ENCODE measurements at regions of chr18 and their contacts with region 1.

Region 1: GRCh38 chr18:25896178-25896780 is 194.1 kb downstream of the SS18 start:
- DNase-seq: peak; percentile 55
- CTCF ChIP-seq: peak; percentile 69

Region 2: GRCh38 chr18:25883091-25883490 is 13.2 kb before region 1 on chr18:
- CTCF ChIA-PET with region 1: interaction called, 17 read pairs
- POLR2A ChIA-PET with region 1: no interaction called
- DNase-seq: no peak
- CTCF ChIP-seq: no peak

Region 3: GRCh38 chr18:25915907-25916306 is 19.6 kb after region 1 on chr18:
- CTCF ChIA-PET with region 1: interaction called, 17 read pairs
- POLR2A ChIA-PET with region 1: interaction called, 3 read pairs
- DNase-seq: no peak
- CTCF ChIP-seq: no peak

Region 4: GRCh38 chr18:25953126-25953525 is 56.8 kb after region 1 on chr18:
- CTCF ChIA-PET with region 1: no interaction called
- POLR2A ChIA-PET with region 1: no interaction called
- DNase-seq: no peak
- CTCF ChIP-seq: no peak

Region 5: GRCh38 chr18:26843760-26844159 is 947.5 kb after region 1 on chr18:
- CTCF ChIA-PET with region 1: no interaction called
- POLR2A ChIA-PET with region 1: no interaction called
- DNase-seq: no peak
- CTCF ChIP-seq: no peak